ENCODE measurements at regions of chr6 and their contacts with region 1.

Region 1: GRCh38 chr6:118968416-118968815 is 33.5 kb upstream of the MCM9 start:
- DNase-seq: no peak
- ATAC-seq: no peak

Region 2: GRCh38 chr6:119020597-119021561 is 52.5 kb after region 1 on chr6:
- intact Hi-C with region 1: no loop called
- DNase-seq: no peak
- ATAC-seq: no peak

Region 3: GRCh38 chr6:119102901-119103300 is 134.5 kb after region 1 on chr6:
- intact Hi-C with region 1: loop called in 1 of 2 experiments (anchors 2 kb)
- DNase-seq: no peak
- ATAC-seq: no peak

Region 4: DNA sequence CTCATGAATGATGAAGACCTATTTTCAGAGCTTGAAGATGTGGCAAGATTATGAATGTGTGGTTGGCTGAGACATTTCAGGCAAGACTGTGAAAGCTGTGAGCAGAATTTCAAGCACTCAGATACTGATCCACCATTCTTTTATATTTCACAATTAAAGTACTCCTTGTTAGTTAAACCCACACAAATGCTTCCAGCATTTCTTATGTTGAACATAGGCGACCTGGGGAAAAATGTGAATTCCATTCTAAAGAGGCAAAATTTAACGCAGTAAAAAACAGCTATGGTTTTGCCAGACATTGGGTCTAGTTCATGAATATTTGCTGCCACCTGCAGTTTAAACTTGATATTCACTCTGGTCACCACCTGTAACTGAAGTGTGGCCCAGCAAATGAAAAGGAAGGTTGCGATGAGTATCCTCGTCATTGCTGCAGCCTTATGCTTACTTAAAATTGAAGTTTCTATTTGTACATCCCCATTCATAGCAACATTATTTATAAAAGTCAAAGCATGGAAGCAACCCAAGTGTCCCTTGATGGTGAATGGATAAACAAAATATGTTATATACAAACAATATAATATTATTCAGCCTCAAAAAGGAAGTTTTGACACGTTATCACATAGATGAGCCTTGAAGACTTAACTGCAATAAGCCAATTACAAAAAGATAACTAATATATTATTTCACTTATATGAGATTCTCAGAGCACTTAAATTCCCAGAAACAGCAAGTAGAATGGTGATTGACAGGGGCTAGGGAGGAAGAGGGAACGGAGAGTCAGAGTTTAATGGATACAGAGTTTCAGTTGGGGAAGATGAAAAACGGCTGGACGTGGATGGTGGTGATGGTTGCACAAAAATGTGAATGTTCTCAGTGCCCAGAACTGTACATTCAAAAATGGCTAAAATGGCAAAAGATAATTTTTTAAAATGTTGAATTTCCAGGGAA is 142.5 kb after region 1 on chr6:
- intact Hi-C with region 1: loop called in 1 of 2 experiments (anchors 5 kb)
- DNase-seq: no peak
- ATAC-seq: peak; percentile 79

Measured in left colon (tissue), 2 donors.